ENCODE measurements at regions of chr5 and their contacts with region 1.

Region 1: DNA sequence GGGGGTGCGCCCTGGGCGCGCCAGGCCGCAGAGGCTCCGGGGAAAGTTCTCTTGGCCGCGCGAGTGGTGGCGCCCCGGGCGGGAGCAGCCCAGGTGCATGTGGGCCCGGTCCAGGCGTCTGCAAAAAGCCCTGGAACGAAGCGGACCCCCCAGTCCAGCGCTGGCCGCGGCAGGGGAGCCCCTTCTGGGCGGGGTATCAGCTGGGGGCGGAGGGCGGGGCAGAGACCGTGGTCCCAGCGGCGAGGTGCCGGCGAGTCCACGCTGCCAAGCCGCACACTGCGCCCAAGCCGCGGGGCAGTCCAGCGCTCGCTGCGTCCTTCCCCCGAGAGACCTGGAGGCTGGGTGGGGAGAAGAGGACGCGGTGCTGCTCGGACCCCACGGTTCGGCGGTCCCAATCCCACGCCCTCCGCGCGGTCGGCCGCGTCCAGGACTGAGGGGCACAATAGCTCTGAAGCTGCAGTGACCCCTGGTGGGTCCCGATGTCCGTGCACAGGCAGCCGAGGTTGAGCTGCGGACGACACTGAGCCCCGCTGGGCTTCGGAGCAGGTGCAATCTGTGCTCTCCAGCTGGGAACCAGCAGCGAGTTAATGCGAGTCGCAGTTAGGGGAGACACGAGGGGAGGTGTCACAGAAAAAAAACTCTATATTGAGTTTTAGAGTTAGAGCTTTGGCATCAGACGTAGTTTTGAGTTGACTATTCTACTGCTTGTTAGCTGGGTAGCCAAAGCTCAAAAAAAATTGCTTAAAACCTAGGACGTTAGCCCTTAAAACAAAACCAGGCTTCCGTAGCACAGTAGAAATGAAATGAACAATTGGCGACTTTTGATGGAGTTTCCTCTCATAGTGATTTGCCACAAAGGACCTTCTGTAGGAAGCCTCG is 1.1 kb upstream of the EPB41L4A start:
- DNase-seq: peak; percentile 87 to 92 (median 88)
- ATAC-seq: peak; percentile 92 to 95 (median 92)
- H3K4me3 ChIP-seq: peak overlapping the region; percentile 63 to 97 (median 88)
- H3K27ac ChIP-seq: peak overlapping the region; percentile 72 to 95 (median 92)
- H3K4me1 ChIP-seq: peaks cover 0 to 31% (median 16%) of the 10 kb centered on the region in 12 donors
- H3K27me3 ChIP-seq: peaks cover 0 to 25% (median 0%) of the 10 kb centered on the region in 9 donors
- CTCF ChIP-seq: peak; percentile 81 to 98 (median 93)
- POLR2A ChIP-seq: no peak

Region 2: DNA sequence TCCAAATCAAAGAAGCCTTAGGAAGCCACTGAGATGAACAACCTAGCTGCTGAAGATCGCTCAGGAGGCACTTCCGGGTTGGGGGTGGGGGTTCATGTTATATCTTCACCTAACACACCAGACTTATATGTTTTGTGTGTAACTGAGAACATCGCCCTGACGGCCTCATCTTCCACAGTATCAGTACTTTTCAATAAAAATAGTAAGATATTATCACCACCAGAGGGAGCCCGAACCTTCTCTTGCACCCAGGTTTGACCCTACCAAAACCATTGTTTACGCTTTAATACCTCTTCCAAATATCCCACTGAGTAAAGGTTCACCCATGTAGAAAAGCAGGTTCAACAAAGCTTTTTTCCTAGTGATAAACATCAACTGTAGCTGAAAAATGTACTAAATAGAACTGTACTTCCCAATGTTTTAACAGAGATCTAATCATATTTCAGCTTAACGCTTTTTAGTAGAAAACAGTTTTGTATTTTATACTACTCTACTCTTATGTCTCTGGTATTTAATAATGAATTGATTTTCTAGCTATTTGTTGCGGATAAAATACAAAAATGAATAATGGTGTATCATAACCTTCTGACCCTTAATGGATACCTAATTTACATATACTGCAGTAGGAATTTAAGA is 245.1 kb before region 1 on chr5:
- intact Hi-C with region 1: loop called (anchors 1 to 5 kb)
- DNase-seq: peak in 2 of 5 donors; percentile 16 to 26
- ATAC-seq: peak in 3 of 4 donors; percentile 64 to 74 (median 72)
- H3K4me3 ChIP-seq: no peak overlapping the region
- H3K27ac ChIP-seq: no peak overlapping the region
- H3K4me1 ChIP-seq: no peaks in the 10 kb centered on the region
- H3K27me3 ChIP-seq: no peaks in the 10 kb centered on the region
- CTCF ChIP-seq: peak; percentile 48 to 76 (median 70)
- POLR2A ChIP-seq: no peak

Region 3: GRCh38 chr5:112293587-112293986 is 126.6 kb before region 1 on chr5:
- intact Hi-C with region 1: loop called in 1 of 10 experiments (anchors 5 kb)
- DNase-seq: peak in 2 of 5 donors; percentile 15 to 27
- ATAC-seq: peak; percentile 71 to 83 (median 74)
- H3K4me3 ChIP-seq: peak overlapping the region in 7 of 12 donors; percentile 16 to 41 (median 28)
- H3K27ac ChIP-seq: peak overlapping the region in 1 of 12 donors; percentile 20
- H3K4me1 ChIP-seq: peaks cover 0 to 38% (median 12%) of the 10 kb centered on the region in 12 donors
- H3K27me3 ChIP-seq: no peaks in the 10 kb centered on the region
- CTCF ChIP-seq: no peak
- POLR2A ChIP-seq: no peak

Region 4: DNA sequence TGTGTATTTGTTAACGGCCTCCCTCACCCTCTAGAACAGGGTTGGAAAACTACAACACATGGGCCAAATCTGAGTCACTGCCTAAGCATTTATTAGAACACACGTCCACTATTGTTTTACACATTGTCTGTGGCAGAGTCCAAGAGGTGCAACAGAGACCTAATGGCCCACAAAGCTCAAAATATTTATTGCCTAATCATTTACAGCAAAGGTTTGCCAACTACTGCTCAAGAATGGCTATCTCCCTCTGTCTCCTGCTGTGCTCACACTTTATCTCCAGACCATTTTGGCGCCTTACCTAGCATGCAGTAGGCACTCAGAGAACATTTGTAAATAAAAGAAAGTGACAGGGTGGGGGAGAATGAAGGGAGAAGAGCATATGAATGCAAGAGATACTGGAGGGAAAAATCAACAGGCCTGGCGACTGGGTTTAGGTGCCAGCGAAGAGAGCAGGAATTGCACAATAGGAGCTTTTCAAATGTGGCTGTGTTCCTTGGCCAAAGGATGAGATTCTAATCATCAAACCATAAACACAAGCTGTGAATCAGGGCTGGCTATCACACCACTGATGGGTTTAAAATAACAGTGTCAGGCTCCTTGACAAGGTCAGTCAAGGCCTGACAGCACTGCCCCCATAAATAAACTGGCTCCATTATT is 81.4 kb before region 1 on chr5:
- intact Hi-C with region 1: loop called in 3 of 10 experiments (anchors 5 to 10 kb)
- DNase-seq: peak in 1 of 5 donors; percentile 39
- ATAC-seq: peak; percentile 87 to 94 (median 89)
- H3K4me3 ChIP-seq: no peak overlapping the region
- H3K27ac ChIP-seq: peak overlapping the region; percentile 25 to 73 (median 60)
- H3K4me1 ChIP-seq: peaks cover 3 to 69% (median 41%) of the 10 kb centered on the region in 12 donors
- H3K27me3 ChIP-seq: no peaks in the 10 kb centered on the region
- CTCF ChIP-seq: no peak
- POLR2A ChIP-seq: no peak

Region 5: GRCh38 chr5:112366987-112367386 is 53.2 kb before region 1 on chr5:
- intact Hi-C with region 1: no loop called
- DNase-seq: no peak
- ATAC-seq: peak in 3 of 4 donors; percentile 12 to 62 (median 12)
- H3K4me3 ChIP-seq: no peak overlapping the region
- H3K27ac ChIP-seq: peak overlapping the region in 3 of 12 donors; percentile 12 to 45 (median 31)
- H3K4me1 ChIP-seq: peaks cover 0 to 49% (median 21%) of the 10 kb centered on the region in 12 donors
- H3K27me3 ChIP-seq: no peaks in the 10 kb centered on the region
- CTCF ChIP-seq: peak in 8 of 12 donors; percentile 10 to 38 (median 20)
- POLR2A ChIP-seq: no peak